WTC11 (cell line): ENCODE measurements at regions of chr16 and their contacts with region 1.

Region 1: GRCh38 chr16:67841764-67842508 is at the start of gene THAP11:
- DNase-seq: peak; percentile 98
- ATAC-seq: peak; percentile 51
- H3K4me3 Mint-ChIP-seq: peak within 1 kb of the TSS; percentile 94
- H3K27ac Mint-ChIP-seq: peak within 1 kb of the TSS; percentile 97
- H3K4me1 Mint-ChIP-seq: peaks cover 40% of the 10 kb centered on the region
- H3K27me3 Mint-ChIP-seq: no peaks in the 10 kb centered on the region
- CTCF ChIP-seq: peak; percentile 69
- total RNA-seq, gene THAP11: 46.5 to 49.0 TPM (median 47.4 TPM) in 3 replicates

Region 2: GRCh38 chr16:67781565-67781921 is 60.4 kb before region 1 on chr16:
- CTCF ChIA-PET with region 1: no interaction called
- POLR2A ChIA-PET with region 1: no interaction called
- DNase-seq: no peak
- ATAC-seq: no peak
- H3K4me3 Mint-ChIP-seq: no peak overlapping the region
- H3K27ac Mint-ChIP-seq: peak overlapping the region; percentile 37; the same call in 1 of the 2 replicates
- H3K4me1 Mint-ChIP-seq: peaks cover 6% of the 10 kb centered on the region
- H3K27me3 Mint-ChIP-seq: no peaks in the 10 kb centered on the region
- CTCF ChIP-seq: no peak

Region 3: DNA sequence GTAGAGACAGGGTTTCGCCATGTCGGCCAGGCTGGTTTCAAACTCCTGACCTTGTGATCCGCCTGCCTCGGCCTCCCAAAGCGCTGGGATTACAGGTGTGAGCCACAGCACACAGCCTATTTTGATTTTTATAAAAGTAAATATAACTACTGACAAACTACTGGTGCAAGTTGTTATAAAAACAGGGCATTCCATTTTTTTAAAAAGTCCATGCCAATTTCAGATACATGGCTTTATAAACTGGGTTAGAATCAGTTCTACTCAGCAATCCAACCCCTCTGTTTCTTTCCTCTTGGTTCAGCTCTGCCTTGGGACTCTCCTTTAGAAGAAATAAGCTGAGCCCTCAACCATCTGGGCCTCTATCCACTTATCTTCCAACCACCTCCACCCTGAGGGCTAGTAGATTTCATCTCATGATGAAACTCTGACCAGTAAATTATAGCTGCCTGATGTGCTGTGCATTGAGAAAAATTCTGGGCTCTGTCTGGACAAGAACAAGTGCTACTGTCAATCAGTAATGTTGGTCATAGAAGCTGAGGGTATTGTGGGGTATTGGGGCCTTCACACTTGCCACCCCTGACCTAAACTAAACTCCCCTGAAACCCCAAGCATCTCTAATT is 45.7 kb before region 1 on chr16:
- CTCF ChIA-PET with region 1: no interaction called
- POLR2A ChIA-PET with region 1: no interaction called
- DNase-seq: no peak
- ATAC-seq: no peak
- H3K4me3 Mint-ChIP-seq: no peak overlapping the region
- H3K27ac Mint-ChIP-seq: no peak overlapping the region
- H3K4me1 Mint-ChIP-seq: no peaks in the 10 kb centered on the region
- H3K27me3 Mint-ChIP-seq: no peaks in the 10 kb centered on the region
- CTCF ChIP-seq: no peak

Region 4: GRCh38 chr16:67865316-67865715 is 23.4 kb after region 1 on chr16:
- CTCF ChIA-PET with region 1: interaction called, 16 read pairs
- POLR2A ChIA-PET with region 1: no interaction called
- DNase-seq: peak; percentile 58
- ATAC-seq: peak; percentile 88
- H3K4me3 Mint-ChIP-seq: no peak overlapping the region
- H3K27ac Mint-ChIP-seq: 0 out of 2 replicates have a peak overlapping the region, but pooled peaks have one; percentile 26
- H3K4me1 Mint-ChIP-seq: peaks cover 4% of the 10 kb centered on the region; the same call in 1 of the 2 replicates
- H3K27me3 Mint-ChIP-seq: no peaks in the 10 kb centered on the region
- CTCF ChIP-seq: no peak